ENCODE measurements at regions of chr2 and their contacts with region 1.

Region 1: GRCh38 chr2:164841719-164842623 is at the start of gene COBLL1:
- DNase-seq: peak; percentile 87
- H3K4me3 ChIP-seq: peak within 1 kb of the TSS; percentile 82 to 87 (median 83)
- H3K27ac ChIP-seq: peak within 1 kb of the TSS; percentile 82
- H3K4me1 ChIP-seq: peaks cover 20% of the 10 kb centered on the region
- H3K27me3 ChIP-seq: no peaks in the 10 kb centered on the region
- CTCF ChIP-seq: peak; percentile 61 to 91
- total RNA-seq, gene COBLL1: 35.0 to 53.7 TPM

Region 2: DNA sequence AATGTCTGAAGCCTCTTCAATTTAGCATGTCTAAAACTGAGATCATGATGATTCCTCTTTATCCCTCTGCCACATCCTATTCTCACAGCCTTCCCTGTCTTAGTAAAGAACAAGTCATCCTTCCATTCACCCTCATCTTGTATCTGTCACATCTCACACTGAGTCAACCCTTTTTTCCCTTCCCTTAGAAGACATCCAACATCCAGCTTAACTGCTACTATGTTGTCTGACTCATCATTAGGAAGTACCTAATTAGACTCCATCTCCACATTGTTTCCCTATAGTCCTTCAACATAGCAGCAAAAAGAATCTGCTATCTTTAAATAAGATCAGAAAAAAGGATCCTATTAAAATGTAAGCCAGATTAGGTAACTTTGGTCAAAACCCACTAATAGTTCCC is 135.4 kb before region 1 on chr2:
- CTCF ChIA-PET with region 1: no interaction called
- dilution Hi-C with region 1: no loop called
- in situ Hi-C with region 1: no loop called
- intact Hi-C with region 1: no loop called
- DNase-seq: peak; percentile 90
- H3K4me3 ChIP-seq: no peak overlapping the region
- H3K27ac ChIP-seq: no peak overlapping the region
- H3K4me1 ChIP-seq: peaks cover 10% of the 10 kb centered on the region
- H3K27me3 ChIP-seq: no peaks in the 10 kb centered on the region
- CTCF ChIP-seq: no peak

Region 3: GRCh38 chr2:164717000-164717803 is 124.8 kb before region 1 on chr2:
- CTCF ChIA-PET with region 1: no interaction called
- dilution Hi-C with region 1: no loop called
- in situ Hi-C with region 1: no loop called
- intact Hi-C with region 1: loop called (anchors 5 kb)
- DNase-seq: no peak
- H3K4me3 ChIP-seq: no peak overlapping the region
- H3K27ac ChIP-seq: no peak overlapping the region
- H3K4me1 ChIP-seq: peaks cover 19% of the 10 kb centered on the region
- H3K27me3 ChIP-seq: no peaks in the 10 kb centered on the region
- CTCF ChIP-seq: peak; percentile 45 to 59

Region 4: GRCh38 chr2:164737612-164738081 is 104.3 kb before region 1 on chr2:
- CTCF ChIA-PET with region 1: interaction called, 4 read pairs
- dilution Hi-C with region 1: no loop called
- in situ Hi-C with region 1: loop called in 1 of 2 experiments (anchors 25 kb)
- intact Hi-C with region 1: loop called (anchors 1 kb)
- DNase-seq: peak; percentile 65
- H3K4me3 ChIP-seq: no peak overlapping the region
- H3K27ac ChIP-seq: peak overlapping the region; percentile 24
- H3K4me1 ChIP-seq: peaks cover 34% of the 10 kb centered on the region
- H3K27me3 ChIP-seq: no peaks in the 10 kb centered on the region
- CTCF ChIP-seq: peak; percentile 68 to 69

Region 5: GRCh38 chr2:164859251-164859800 is 17.4 kb after region 1 on chr2:
- CTCF ChIA-PET with region 1: no interaction called
- dilution Hi-C with region 1: no loop called
- in situ Hi-C with region 1: no loop called
- intact Hi-C with region 1: no loop called
- DNase-seq: no peak
- H3K4me3 ChIP-seq: no peak overlapping the region
- H3K27ac ChIP-seq: no peak overlapping the region
- H3K4me1 ChIP-seq: peaks cover 11% of the 10 kb centered on the region
- H3K27me3 ChIP-seq: no peaks in the 10 kb centered on the region
- CTCF ChIP-seq: no peak

Region 6: DNA sequence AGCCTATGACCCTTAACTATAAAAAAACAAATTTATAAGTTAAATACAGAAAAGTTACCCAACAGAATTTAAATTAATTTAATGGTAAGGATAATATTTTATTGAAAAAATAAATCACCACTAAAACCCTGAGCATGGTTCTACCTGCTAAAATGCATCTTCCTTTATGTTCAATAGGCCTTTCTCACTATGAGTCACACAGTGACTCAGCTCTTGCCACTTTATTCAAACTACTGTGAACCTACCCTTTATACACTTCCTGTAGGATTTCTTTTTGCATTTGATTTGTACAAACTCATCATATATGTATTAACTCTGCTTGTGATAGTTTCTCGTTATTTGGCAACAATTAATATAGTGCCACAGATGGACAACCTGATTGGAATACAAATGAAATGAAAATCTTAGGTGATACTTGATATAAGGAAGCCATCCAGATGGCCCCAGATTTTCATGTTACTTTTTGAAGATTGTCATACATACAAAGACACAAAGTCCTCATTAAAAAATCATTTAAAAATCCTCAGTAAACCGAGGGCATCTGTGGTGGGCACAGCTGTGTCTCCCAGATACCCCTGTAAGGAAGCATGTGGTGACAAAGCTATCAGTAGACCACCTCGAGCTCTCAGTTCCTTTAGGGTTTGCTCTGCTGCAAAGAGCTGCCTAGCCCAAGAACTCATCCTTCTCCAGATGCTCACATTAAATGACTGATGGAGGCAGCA is 54.8 kb after region 1 on chr2:
- CTCF ChIA-PET with region 1: no interaction called
- dilution Hi-C with region 1: no loop called
- in situ Hi-C with region 1: no loop called
- intact Hi-C with region 1: loop called (anchors 5 kb)
- DNase-seq: peak; percentile 79
- H3K4me3 ChIP-seq: no peak overlapping the region
- H3K27ac ChIP-seq: peak overlapping the region; percentile 25
- H3K4me1 ChIP-seq: peaks cover 18% of the 10 kb centered on the region
- H3K27me3 ChIP-seq: no peaks in the 10 kb centered on the region
- CTCF ChIP-seq: no peak

Region 7: GRCh38 chr2:164910101-164910899 is 68.3 kb after region 1 on chr2:
- CTCF ChIA-PET with region 1: interaction called, 9 read pairs
- dilution Hi-C with region 1: no loop called
- in situ Hi-C with region 1: loop called in 1 of 2 experiments (anchors 5 kb)
- intact Hi-C with region 1: loop called (anchors 1 kb)
- DNase-seq: peak; percentile 84
- H3K4me3 ChIP-seq: no peak overlapping the region
- H3K27ac ChIP-seq: no peak overlapping the region
- H3K4me1 ChIP-seq: peaks cover 22% of the 10 kb centered on the region
- H3K27me3 ChIP-seq: no peaks in the 10 kb centered on the region
- CTCF ChIP-seq: no peak

Region 8: DNA sequence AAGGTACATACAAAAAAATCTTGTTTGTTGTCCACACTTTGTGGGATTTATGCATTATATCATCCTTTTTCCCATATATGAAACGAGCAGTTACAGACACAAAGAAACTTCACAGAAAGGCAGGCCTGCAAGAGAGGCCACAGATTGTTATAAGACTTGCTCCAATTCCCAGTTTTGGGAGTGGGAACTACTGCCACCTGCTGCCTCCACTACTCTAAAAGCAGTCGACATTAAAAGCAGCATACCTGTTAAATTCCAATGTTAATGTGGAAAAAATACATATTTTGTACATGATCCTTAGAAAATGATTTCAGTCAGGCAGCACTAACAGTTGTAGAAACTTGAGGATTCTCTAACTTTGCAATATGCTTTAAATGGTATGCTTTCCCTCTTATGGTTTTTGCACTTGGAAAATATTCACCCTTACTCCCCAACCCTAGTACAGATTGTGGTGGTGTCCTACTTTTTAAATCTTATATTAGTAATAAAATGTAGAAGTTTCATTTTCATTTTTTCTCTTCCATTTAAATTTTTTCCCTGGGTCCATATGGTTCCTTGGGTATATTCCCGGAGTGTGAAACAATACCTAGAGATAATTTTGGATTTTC is 75.4 kb after region 1 on chr2:
- CTCF ChIA-PET with region 1: interaction called, 6 read pairs
- dilution Hi-C with region 1: no loop called
- in situ Hi-C with region 1: loop called in 1 of 2 experiments (anchors 5 kb)
- intact Hi-C with region 1: loop called (anchors 1 kb)
- DNase-seq: peak; percentile 49
- H3K4me3 ChIP-seq: no peak overlapping the region
- H3K27ac ChIP-seq: no peak overlapping the region
- H3K4me1 ChIP-seq: peaks cover 22% of the 10 kb centered on the region
- H3K27me3 ChIP-seq: no peaks in the 10 kb centered on the region
- CTCF ChIP-seq: peak; percentile 44 to 79

Region 9: GRCh38 chr2:165305391-165306096 is 463.6 kb after region 1 on chr2:
- CTCF ChIA-PET with region 1: no interaction called
- dilution Hi-C with region 1: no loop called
- in situ Hi-C with region 1: no loop called
- intact Hi-C with region 1: no loop called
- DNase-seq: no peak
- H3K4me3 ChIP-seq: no peak overlapping the region
- H3K27ac ChIP-seq: no peak overlapping the region
- H3K4me1 ChIP-seq: no peaks in the 10 kb centered on the region
- H3K27me3 ChIP-seq: no peaks in the 10 kb centered on the region
- CTCF ChIP-seq: no peak

Measured in mammary epithelial cell (primary cell).